GM12878 (cell line): ENCODE measurements at regions of chr4 and their contacts with region 1.

Region 1: DNA sequence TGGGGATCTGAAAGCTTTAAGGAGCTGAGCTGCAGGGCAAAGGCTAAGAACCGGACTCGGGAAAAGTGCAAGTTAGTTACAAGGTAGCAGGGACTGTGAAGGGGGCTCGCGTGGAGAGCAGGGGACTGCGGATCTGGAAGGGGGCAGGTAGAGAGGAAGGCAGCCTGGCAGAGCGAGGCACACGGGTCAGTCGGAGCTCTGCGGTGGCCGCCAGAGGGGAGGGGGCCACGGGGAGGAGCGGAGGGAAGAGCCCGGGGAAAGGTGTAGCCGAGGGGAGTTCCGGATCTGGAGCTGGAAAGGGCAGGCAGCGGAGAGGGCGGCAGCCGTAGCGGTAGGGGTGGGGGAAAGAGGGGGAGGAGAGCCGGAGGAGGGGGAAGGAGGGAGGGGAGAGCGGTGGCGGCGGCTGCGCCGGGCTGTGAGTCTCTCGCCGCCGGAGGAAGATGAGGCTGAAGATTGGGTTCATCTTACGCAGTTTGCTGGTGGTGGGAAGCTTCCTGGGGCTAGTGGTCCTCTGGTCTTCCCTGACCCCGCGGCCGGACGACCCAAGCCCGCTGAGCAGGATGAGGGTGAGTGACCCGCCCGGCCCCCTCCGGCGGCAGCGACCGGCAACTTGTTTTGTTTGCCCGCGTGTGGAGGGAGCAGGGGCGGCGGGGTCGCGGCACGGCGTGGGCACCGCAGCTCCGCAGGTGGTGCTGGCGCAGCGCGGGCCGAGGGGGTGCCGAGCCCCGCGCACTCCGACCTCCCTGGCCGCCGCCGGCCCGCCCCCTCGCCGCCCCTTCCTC is at the start of gene GALNT7:
- DNase-seq: no peak
- ATAC-seq: peak; percentile 62
- H3K4me3 ChIP-seq: peak within 1 kb of the TSS; percentile 99
- H3K27ac ChIP-seq: peak within 1 kb of the TSS; percentile 94
- H3K4me1 ChIP-seq: peaks cover 18% of the 10 kb centered on the region
- H3K27me3 ChIP-seq: no peaks in the 10 kb centered on the region
- CTCF ChIP-seq: no peak
- EP300 ChIP-seq: no peak
- POLR2A ChIP-seq: peak; percentile 66
- RAD21 ChIP-seq: no peak
- polyA plus RNA-seq, gene GALNT7: 14.2 to 14.8 TPM

Region 2: GRCh38 chr4:173025131-173025530 is 143.5 kb before region 1 on chr4:
- CTCF ChIA-PET with region 1: interaction called, 6 read pairs
- POLR2A ChIA-PET with region 1: no interaction called
- RAD21 ChIA-PET with region 1: interaction called, 7 read pairs
- SMC1A ChIA-PET with region 1: interaction called, 3 read pairs
- in situ Hi-C with region 1: no loop called
- intact Hi-C with region 1: loop called (anchors 5 kb)
- DNase-seq: peak; percentile 16
- ATAC-seq: peak; percentile 95
- H3K4me3 ChIP-seq: no peak overlapping the region
- H3K27ac ChIP-seq: no peak overlapping the region
- H3K4me1 ChIP-seq: no peaks in the 10 kb centered on the region
- H3K27me3 ChIP-seq: no peaks in the 10 kb centered on the region; a peak in 1 of 4 replicates
- CTCF ChIP-seq: peak; percentile 54 to 63 (median 58); a peak in 5 of 6 replicates
- EP300 ChIP-seq: no peak
- POLR2A ChIP-seq: no peak
- RAD21 ChIP-seq: peak; percentile 91

Region 3: DNA sequence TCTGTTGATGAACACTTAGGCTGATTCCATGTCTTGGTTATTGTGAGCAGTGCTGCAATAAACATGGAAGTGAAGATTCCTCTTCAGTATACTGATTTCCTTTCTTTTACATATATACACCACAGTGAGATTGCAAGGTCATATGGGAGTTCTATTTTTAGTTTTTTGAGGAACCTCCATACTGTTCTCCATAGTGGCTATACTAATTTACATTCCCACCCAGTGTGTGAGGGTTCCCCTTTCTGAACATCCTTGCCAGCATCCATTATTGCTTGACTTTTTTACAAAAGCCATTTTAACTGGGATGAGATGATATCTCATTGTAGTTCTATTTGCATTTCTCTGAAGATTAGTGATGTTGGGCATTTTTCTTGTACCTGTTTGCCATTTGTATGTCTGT is 80.4 kb before region 1 on chr4:
- CTCF ChIA-PET with region 1: no interaction called
- POLR2A ChIA-PET with region 1: no interaction called
- RAD21 ChIA-PET with region 1: no interaction called
- SMC1A ChIA-PET with region 1: no interaction called
- in situ Hi-C with region 1: no loop called
- intact Hi-C with region 1: no loop called
- DNase-seq: no peak
- ATAC-seq: no peak
- H3K4me3 ChIP-seq: no peak overlapping the region
- H3K27ac ChIP-seq: no peak overlapping the region
- H3K4me1 ChIP-seq: no peaks in the 10 kb centered on the region
- H3K27me3 ChIP-seq: no peaks in the 10 kb centered on the region
- CTCF ChIP-seq: no peak
- EP300 ChIP-seq: no peak
- POLR2A ChIP-seq: no peak
- RAD21 ChIP-seq: no peak

Region 4: DNA sequence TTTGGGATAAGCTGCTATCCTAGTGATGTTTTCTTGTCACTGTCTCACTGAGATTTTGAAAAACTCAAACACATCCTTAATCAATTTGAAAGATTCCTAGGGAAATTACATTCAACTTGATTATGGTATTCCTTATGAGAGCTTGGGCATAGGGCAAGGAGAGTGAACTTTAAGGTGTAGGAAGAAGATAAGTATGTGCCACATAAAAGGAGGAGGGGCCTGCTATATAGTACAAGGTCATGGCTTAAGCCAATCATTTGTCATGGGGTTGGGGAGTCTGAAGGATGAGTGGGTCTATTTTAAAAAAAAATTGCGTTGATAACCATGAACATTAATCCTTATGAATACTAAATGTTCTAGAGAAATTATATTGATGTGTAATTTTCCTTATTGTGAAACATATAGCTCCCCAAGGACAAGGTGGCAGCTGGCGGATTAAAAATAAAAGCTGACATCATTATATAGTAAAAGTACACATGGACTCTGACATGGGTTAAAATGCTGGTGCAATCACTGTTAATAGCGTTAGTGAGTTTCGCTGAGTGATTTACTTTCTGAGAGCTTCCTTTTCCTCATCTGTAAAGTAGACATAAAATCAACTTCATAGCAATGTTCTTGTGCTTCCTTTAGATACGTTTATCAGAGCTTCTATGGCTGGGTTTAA is 17.4 kb after region 1 on chr4:
- CTCF ChIA-PET with region 1: interaction called, 4 read pairs
- POLR2A ChIA-PET with region 1: interaction called, 4 read pairs
- RAD21 ChIA-PET with region 1: interaction called, 4 read pairs
- SMC1A ChIA-PET with region 1: interaction called, 11 read pairs
- in situ Hi-C with region 1: no loop called
- intact Hi-C with region 1: no loop called
- DNase-seq: no peak
- ATAC-seq: peak; percentile 44
- H3K4me3 ChIP-seq: no peak overlapping the region
- H3K27ac ChIP-seq: peak overlapping the region; percentile 66
- H3K4me1 ChIP-seq: peaks cover 13% of the 10 kb centered on the region; the same call in 1 of the 2 replicates
- H3K27me3 ChIP-seq: no peaks in the 10 kb centered on the region
- CTCF ChIP-seq: no peak
- EP300 ChIP-seq: no peak
- POLR2A ChIP-seq: no peak
- RAD21 ChIP-seq: no peak

Region 5: DNA sequence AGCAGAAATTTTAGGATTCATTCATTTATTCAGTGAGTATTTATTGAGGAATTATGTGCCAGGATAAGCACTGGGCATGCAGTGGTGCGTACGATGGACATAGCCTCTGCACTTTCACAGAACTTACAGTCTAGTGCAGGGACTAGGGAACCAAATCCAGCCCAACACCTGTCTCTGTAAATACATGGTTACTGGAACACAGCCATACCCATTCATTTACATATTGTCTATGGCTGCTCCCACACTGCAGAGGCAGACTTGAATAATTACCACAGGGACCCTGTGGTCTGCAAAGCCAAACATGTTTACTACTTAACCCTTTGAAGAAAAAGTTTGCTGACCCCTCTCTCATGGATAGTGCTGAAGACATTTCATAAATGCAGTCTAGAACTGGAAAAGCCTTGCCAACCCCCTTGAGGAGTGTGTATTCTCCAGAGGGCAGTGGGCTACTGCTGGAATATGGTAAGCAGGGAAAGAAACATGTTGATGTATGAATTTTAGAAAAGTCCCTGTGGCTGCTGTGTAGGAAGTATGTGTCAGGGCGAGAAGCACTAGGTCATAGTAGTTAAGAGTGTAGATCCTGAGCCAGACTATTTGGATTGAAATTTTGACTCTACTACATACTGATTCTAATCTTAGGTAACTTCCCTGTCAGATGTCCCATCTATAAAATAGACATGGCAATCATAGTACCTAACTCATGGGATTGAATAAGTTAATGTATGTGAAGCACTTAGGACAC is 75.5 kb after region 1 on chr4:
- CTCF ChIA-PET with region 1: interaction called, 6 read pairs
- POLR2A ChIA-PET with region 1: interaction called, 5 read pairs
- RAD21 ChIA-PET with region 1: interaction called, 9 read pairs
- SMC1A ChIA-PET with region 1: interaction called, 9 read pairs
- in situ Hi-C with region 1: no loop called
- intact Hi-C with region 1: loop called (anchors 2 kb)
- DNase-seq: no peak
- ATAC-seq: peak; percentile 78
- H3K4me3 ChIP-seq: no peak overlapping the region
- H3K27ac ChIP-seq: no peak overlapping the region
- H3K4me1 ChIP-seq: peaks cover 30% of the 10 kb centered on the region
- H3K27me3 ChIP-seq: no peaks in the 10 kb centered on the region
- CTCF ChIP-seq: no peak
- EP300 ChIP-seq: no peak
- POLR2A ChIP-seq: no peak
- RAD21 ChIP-seq: no peak

Region 6: GRCh38 chr4:173252024-173252935 is 83.7 kb after region 1 on chr4:
- CTCF ChIA-PET with region 1: interaction called, 30 read pairs
- POLR2A ChIA-PET with region 1: interaction called, 14 read pairs
- RAD21 ChIA-PET with region 1: interaction called, 27 read pairs
- SMC1A ChIA-PET with region 1: interaction called, 18 read pairs
- in situ Hi-C with region 1: no loop called
- intact Hi-C with region 1: loop called (anchors 2 kb)
- DNase-seq: peak; percentile 68
- ATAC-seq: peak; percentile 51
- H3K4me3 ChIP-seq: no peak overlapping the region
- H3K27ac ChIP-seq: peak overlapping the region; percentile 61
- H3K4me1 ChIP-seq: peaks cover 26% of the 10 kb centered on the region
- H3K27me3 ChIP-seq: no peaks in the 10 kb centered on the region
- CTCF ChIP-seq: no peak
- EP300 ChIP-seq: no peak; a peak in 1 of 4 replicates
- POLR2A ChIP-seq: no peak
- RAD21 ChIP-seq: peak; percentile 14; the same call in 1 of the 2 replicates

Region 7: DNA sequence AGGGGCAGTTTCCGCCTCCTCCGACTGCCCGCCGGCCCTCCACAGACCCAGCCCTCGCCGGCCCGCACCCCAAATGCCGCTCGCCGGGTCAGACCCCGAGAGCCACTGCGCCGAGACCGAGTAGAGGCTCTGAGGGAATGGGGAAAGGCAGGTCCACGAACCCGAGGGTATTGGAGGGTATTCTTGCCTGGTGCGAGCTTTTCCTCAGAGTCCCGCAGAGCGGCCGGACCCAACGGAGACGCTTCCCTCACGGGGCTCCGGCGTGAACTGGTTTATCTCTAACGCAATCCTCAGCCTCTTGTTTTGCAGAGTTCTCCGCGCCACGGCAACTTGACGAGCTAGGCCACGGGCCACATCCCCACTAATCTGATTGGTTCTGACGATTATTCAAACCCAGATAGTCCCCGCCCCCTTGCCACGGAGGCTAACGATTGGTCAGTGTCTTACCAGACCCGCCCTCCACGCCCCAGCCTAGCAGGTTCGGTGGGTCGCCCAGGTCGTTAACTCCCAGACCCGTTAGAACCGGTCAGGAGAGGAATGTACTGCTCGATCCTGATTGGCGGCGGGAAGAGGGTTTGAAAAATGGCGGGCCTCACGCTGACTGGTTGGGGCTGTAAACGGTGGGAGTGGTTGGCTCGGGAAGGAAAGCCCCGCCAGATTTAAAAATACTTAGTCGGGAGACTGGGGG is 165.6 kb after region 1 on chr4 and contains the start of gene HMGB2:
- CTCF ChIA-PET with region 1: interaction called, 5 read pairs
- POLR2A ChIA-PET with region 1: interaction called, 7 read pairs
- RAD21 ChIA-PET with region 1: interaction called, 3 read pairs
- SMC1A ChIA-PET with region 1: no interaction called
- in situ Hi-C with region 1: no loop called
- intact Hi-C with region 1: loop called (anchors 5 kb)
- DNase-seq: peak; percentile 99
- ATAC-seq: peak; percentile 92
- H3K4me3 ChIP-seq: peak within 1 kb of the TSS; percentile 94
- H3K27ac ChIP-seq: peak within 1 kb of the TSS; percentile 100
- H3K4me1 ChIP-seq: peaks cover 6% of the 10 kb centered on the region
- H3K27me3 ChIP-seq: no peaks in the 10 kb centered on the region
- CTCF ChIP-seq: no peak
- EP300 ChIP-seq: no peak; a peak in 1 of 4 replicates
- POLR2A ChIP-seq: peak; percentile 98
- RAD21 ChIP-seq: no peak
- polyA plus RNA-seq, gene HMGB2: 858 to 954 TPM

Region 8: GRCh38 chr4:173370477-173371291 is 202.1 kb after region 1 on chr4 and contains the start of gene SAP30:
- CTCF ChIA-PET with region 1: interaction called, 3 read pairs
- POLR2A ChIA-PET with region 1: interaction called, 12 read pairs
- RAD21 ChIA-PET with region 1: interaction called, 4 read pairs
- SMC1A ChIA-PET with region 1: interaction called, 3 read pairs
- in situ Hi-C with region 1: no loop called
- intact Hi-C with region 1: loop called (anchors 5 kb)
- DNase-seq: peak; percentile 89
- ATAC-seq: peak; percentile 86
- H3K4me3 ChIP-seq: peak within 1 kb of the TSS; percentile 99
- H3K27ac ChIP-seq: peak within 1 kb of the TSS; percentile 84
- H3K4me1 ChIP-seq: peaks cover 8% of the 10 kb centered on the region
- H3K27me3 ChIP-seq: no peaks in the 10 kb centered on the region
- CTCF ChIP-seq: no peak
- EP300 ChIP-seq: no peak
- POLR2A ChIP-seq: peak; percentile 97
- RAD21 ChIP-seq: no peak
- polyA plus RNA-seq, gene SAP30: 5.4 to 24.0 TPM